Mammary epithelial cell (primary cell): ENCODE measurements at regions of chr18 and their contacts with region 1.

Region 1: DNA sequence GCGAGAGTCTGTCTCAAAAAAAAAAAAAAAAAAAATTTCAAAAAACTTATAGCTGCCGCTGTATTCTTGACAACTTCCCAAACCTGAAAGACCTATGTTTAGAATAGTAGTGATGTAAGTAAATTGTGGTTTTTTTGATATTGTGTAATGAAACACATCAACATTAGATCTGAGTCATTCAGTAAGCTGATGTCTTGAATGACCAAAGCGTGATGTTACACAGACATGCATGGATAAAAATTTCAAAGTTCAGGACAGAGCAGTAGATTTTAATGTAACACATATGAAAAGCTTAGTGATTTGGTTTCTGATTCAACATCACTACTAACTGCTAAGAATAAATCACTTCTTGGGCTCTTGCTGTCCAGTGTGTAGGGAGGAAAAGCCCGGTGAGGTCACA is 69.3 kb upstream of the MEX3C start:
- DNase-seq: peak; percentile 74
- H3K4me3 ChIP-seq: no peak overlapping the region
- H3K27ac ChIP-seq: peak overlapping the region; percentile 37
- H3K4me1 ChIP-seq: peaks cover 7% of the 10 kb centered on the region
- H3K27me3 ChIP-seq: no peaks in the 10 kb centered on the region
- CTCF ChIP-seq: no peak

Region 2: DNA sequence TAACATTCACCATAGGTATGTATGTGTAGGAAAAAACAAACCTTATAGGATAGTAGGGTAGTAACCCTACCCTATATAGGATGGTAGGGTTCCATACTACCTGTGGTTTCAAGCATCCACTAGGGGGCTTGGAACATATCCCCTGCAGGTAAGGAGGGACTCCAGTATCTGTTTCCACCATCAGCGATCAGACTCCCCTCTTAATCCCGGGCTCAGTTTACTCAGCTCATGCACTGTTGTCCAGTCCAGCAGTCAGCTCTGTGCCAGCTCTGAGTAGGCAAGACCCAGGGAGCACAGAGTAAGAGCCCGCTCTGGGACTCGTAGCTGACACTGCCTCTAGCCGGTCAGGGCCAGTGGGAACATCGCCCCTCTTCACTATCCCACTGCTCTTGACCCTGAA is 131.0 kb before region 1 on chr18:
- CTCF ChIA-PET with region 1: no interaction called
- dilution Hi-C with region 1: no loop called
- in situ Hi-C with region 1: loop called in 1 of 2 experiments (anchors 10 kb)
- intact Hi-C with region 1: loop called (anchors 10 kb)
- DNase-seq: no peak
- H3K4me3 ChIP-seq: no peak overlapping the region
- H3K27ac ChIP-seq: peak overlapping the region; percentile 96
- H3K4me1 ChIP-seq: peaks cover 47% of the 10 kb centered on the region
- H3K27me3 ChIP-seq: no peaks in the 10 kb centered on the region
- CTCF ChIP-seq: peak; percentile 12 to 20

Region 3: GRCh38 chr18:51789871-51790270 is 523.1 kb after region 1 on chr18:
- CTCF ChIA-PET with region 1: no interaction called
- dilution Hi-C with region 1: no loop called
- in situ Hi-C with region 1: no loop called
- intact Hi-C with region 1: no loop called
- DNase-seq: no peak
- H3K4me3 ChIP-seq: no peak overlapping the region
- H3K27ac ChIP-seq: no peak overlapping the region
- H3K4me1 ChIP-seq: no peaks in the 10 kb centered on the region
- H3K27me3 ChIP-seq: peaks cover 2% of the 10 kb centered on the region
- CTCF ChIP-seq: no peak